Naive thymus-derived CD4-positive, alpha-beta T cell (primary cell): ENCODE measurements at regions of chr7 and their contacts with region 1.

Region 1: GRCh38 chr7:83096065-83096580 is 66.6 kb downstream of the PCLO start:
- DNase-seq: no peak
- ATAC-seq: no peak
- H3K4me3 ChIP-seq: no peak overlapping the region
- H3K4me3 Mint-ChIP-seq: no peak overlapping the region
- H3K27ac ChIP-seq: no peak overlapping the region
- H3K27ac Mint-ChIP-seq: no peak overlapping the region
- H3K4me1 ChIP-seq: no peaks in the 10 kb centered on the region
- H3K4me1 Mint-ChIP-seq: no peaks in the 10 kb centered on the region
- H3K27me3 ChIP-seq: no peaks in the 10 kb centered on the region
- H3K27me3 Mint-ChIP-seq: no peaks in the 10 kb centered on the region

Region 2: DNA sequence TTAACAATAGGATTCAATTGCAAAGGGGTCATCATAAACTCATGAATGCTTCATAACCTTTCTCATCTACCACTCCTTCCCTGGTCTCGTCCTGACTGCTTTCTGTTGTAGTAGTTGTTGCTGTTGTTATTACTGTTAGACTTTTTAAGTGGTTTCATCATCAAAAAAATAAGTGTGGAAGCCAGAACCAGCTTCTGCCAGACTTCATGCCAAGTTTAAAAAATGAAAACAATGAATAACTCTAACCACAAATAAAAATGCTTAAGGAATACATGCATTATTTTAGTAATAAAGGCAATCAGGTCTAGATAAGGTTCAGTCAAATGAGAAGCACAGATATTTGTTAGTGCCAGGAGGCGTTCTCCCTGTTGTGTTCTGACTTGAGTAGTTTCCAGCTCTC is 18.8 kb before region 1 on chr7:
- CTCF ChIA-PET with region 1: no interaction called
- POLR2A ChIA-PET with region 1: no interaction called
- intact Hi-C with region 1: loop called in 1 of 2 experiments (anchors 1 kb)
- DNase-seq: no peak
- ATAC-seq: no peak
- H3K4me3 ChIP-seq: no peak overlapping the region
- H3K4me3 Mint-ChIP-seq: no peak overlapping the region
- H3K27ac ChIP-seq: no peak overlapping the region
- H3K27ac Mint-ChIP-seq: no peak overlapping the region
- H3K4me1 ChIP-seq: no peaks in the 10 kb centered on the region
- H3K4me1 Mint-ChIP-seq: no peaks in the 10 kb centered on the region
- H3K27me3 ChIP-seq: no peaks in the 10 kb centered on the region
- H3K27me3 Mint-ChIP-seq: no peaks in the 10 kb centered on the region